Endothelial cell of umbilical vein (primary cell): ENCODE measurements at regions of chr7 and their contacts with region 1.

Region 1: GRCh38 chr7:28921822-28922221 is 36.3 kb downstream of the TRIL start:
- DNase-seq: peak; percentile 67
- H3K4me3 ChIP-seq: no peak overlapping the region
- H3K27ac ChIP-seq: no peak overlapping the region
- H3K4me1 ChIP-seq: no peaks in the 10 kb centered on the region
- H3K27me3 ChIP-seq: peaks cover 4 to 6% of the 10 kb centered on the region in 2 experiments
- CTCF ChIP-seq: peak; percentile 74 to 76
- POLR2A ChIP-seq: no peak

Region 2: GRCh38 chr7:28458732-28459131 is 463.1 kb before region 1 on chr7:
- CTCF ChIA-PET with region 1: no interaction called
- POLR2A ChIA-PET with region 1: no interaction called
- dilution Hi-C with region 1: no loop called
- intact Hi-C with region 1: no loop called
- DNase-seq: no peak
- H3K4me3 ChIP-seq: no peak overlapping the region
- H3K27ac ChIP-seq: no peak overlapping the region
- H3K4me1 ChIP-seq: no peaks in the 10 kb centered on the region
- H3K27me3 ChIP-seq: peaks cover 0 to 2% of the 10 kb centered on the region in 2 experiments
- CTCF ChIP-seq: no peak
- POLR2A ChIP-seq: no peak

Region 3: GRCh38 chr7:28708033-28708951 is 213.5 kb before region 1 on chr7:
- CTCF ChIA-PET with region 1: no interaction called
- POLR2A ChIA-PET with region 1: no interaction called
- dilution Hi-C with region 1: no loop called
- intact Hi-C with region 1: no loop called
- DNase-seq: no peak
- H3K4me3 ChIP-seq: no peak overlapping the region
- H3K27ac ChIP-seq: no peak overlapping the region
- H3K4me1 ChIP-seq: no peaks in the 10 kb centered on the region
- H3K27me3 ChIP-seq: no peaks in the 10 kb centered on the region
- CTCF ChIP-seq: no peak
- POLR2A ChIP-seq: no peak

Region 4: GRCh38 chr7:28872226-28872625 is 49.6 kb before region 1 on chr7:
- CTCF ChIA-PET with region 1: interaction called, 10 read pairs
- POLR2A ChIA-PET with region 1: no interaction called
- dilution Hi-C with region 1: no loop called
- intact Hi-C with region 1: no loop called
- DNase-seq: peak; percentile 46
- H3K4me3 ChIP-seq: no peak overlapping the region
- H3K27ac ChIP-seq: no peak overlapping the region
- H3K4me1 ChIP-seq: peaks cover 8% of the 10 kb centered on the region
- H3K27me3 ChIP-seq: peaks cover 0 to 2% of the 10 kb centered on the region in 2 experiments
- CTCF ChIP-seq: no peak
- POLR2A ChIP-seq: no peak

Region 5: DNA sequence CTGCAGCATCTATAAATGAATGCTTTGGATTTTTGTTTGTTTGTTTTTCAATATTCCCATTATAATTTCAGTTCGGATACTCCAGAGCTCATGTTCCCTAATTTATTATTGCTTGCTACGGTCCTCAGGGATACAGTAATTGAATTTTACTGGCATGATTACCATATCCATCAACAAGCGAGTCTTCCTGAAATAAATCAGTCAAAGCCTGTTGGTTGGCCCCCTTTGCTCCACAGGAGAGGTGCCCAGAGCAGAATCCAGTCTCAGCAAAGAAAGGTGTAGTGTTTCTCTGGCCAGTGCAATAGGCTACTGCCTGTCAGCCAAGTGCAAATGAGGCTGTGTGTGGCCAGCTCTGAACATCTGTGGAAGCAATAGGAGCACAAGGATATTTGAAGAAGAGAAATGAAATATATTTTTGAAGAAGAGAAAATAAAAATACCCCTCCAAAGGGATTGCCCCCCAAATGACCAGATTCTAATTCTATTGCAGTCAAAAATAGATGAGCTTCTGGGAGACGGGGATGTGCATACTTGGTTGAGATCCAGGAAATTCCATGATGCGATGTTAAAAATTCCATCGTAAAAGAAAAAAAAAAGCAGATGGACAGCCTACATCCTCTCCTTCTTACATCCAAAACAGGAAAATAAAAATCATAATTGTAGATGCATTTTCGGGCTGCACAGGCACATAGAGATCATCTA is 18.2 kb after region 1 on chr7:
- CTCF ChIA-PET with region 1: interaction called, 63 read pairs
- POLR2A ChIA-PET with region 1: no interaction called
- dilution Hi-C with region 1: no loop called
- intact Hi-C with region 1: no loop called
- DNase-seq: no peak
- H3K4me3 ChIP-seq: no peak overlapping the region
- H3K27ac ChIP-seq: no peak overlapping the region
- H3K4me1 ChIP-seq: no peaks in the 10 kb centered on the region
- H3K27me3 ChIP-seq: no peaks in the 10 kb centered on the region
- CTCF ChIP-seq: no peak
- POLR2A ChIP-seq: no peak

Region 6: GRCh38 chr7:29035044-29035740 is 113.4 kb after region 1 on chr7:
- CTCF ChIA-PET with region 1: interaction called, 22 read pairs
- POLR2A ChIA-PET with region 1: no interaction called
- dilution Hi-C with region 1: no loop called
- intact Hi-C with region 1: loop called (anchors 1 kb)
- DNase-seq: peak; percentile 91
- H3K4me3 ChIP-seq: no peak overlapping the region
- H3K27ac ChIP-seq: peak overlapping the region; percentile 72
- H3K4me1 ChIP-seq: peaks cover 63% of the 10 kb centered on the region
- H3K27me3 ChIP-seq: no peaks in the 10 kb centered on the region
- CTCF ChIP-seq: no peak
- POLR2A ChIP-seq: peak; percentile 40

Region 7: GRCh38 chr7:29309041-29309854 is 387.4 kb after region 1 on chr7:
- CTCF ChIA-PET with region 1: interaction called, 12 read pairs
- POLR2A ChIA-PET with region 1: no interaction called
- dilution Hi-C with region 1: no loop called
- intact Hi-C with region 1: loop called (anchors 2 kb)
- DNase-seq: peak; percentile 28
- H3K4me3 ChIP-seq: no peak overlapping the region
- H3K27ac ChIP-seq: no peak overlapping the region
- H3K4me1 ChIP-seq: peaks cover 19% of the 10 kb centered on the region
- H3K27me3 ChIP-seq: peaks cover 14% of the 10 kb centered on the region in 2 experiments
- CTCF ChIP-seq: peak; percentile 18 to 34
- POLR2A ChIP-seq: no peak

Region 8: GRCh38 chr7:29921404-29922010 is 999.7 kb after region 1 on chr7:
- CTCF ChIA-PET with region 1: interaction called, 8 read pairs
- POLR2A ChIA-PET with region 1: no interaction called
- dilution Hi-C with region 1: no loop called
- intact Hi-C with region 1: loop called (anchors 2 kb)
- DNase-seq: peak; percentile 76
- H3K4me3 ChIP-seq: no peak overlapping the region
- H3K27ac ChIP-seq: no peak overlapping the region
- H3K4me1 ChIP-seq: no peaks in the 10 kb centered on the region
- H3K27me3 ChIP-seq: no peaks in the 10 kb centered on the region
- CTCF ChIP-seq: peak; percentile 84 to 89
- POLR2A ChIP-seq: no peak